Panc1 (cell line): ENCODE measurements at regions of chr1 and their contacts with region 1.

Region 1: GRCh38 chr1:26164036-26164860 is 4.5 kb downstream of the C1orf232 start:
- DNase-seq: no peak
- ATAC-seq: peak; percentile 76
- H3K4me3 ChIP-seq: peak overlapping the region; percentile 43 to 53
- H3K27ac ChIP-seq: peak overlapping the region; percentile 70; the same call in 1 of the 2 replicates
- H3K4me1 ChIP-seq: peaks cover 10% of the 10 kb centered on the region
- H3K27me3 ChIP-seq: no peaks in the 10 kb centered on the region
- CTCF ChIP-seq: peak; percentile 97

Region 2: GRCh38 chr1:25997828-25998761 is 166.2 kb before region 1 on chr1 and contains the start of gene PAFAH2:
- CTCF ChIA-PET with region 1: no interaction called
- POLR2A ChIA-PET with region 1: no interaction called
- in situ Hi-C with region 1: no loop called
- intact Hi-C with region 1: no loop called
- DNase-seq: peak; percentile 99
- ATAC-seq: peak; percentile 99
- H3K4me3 ChIP-seq: peak within 1 kb of the TSS; percentile 78 to 89
- H3K27ac ChIP-seq: peak within 1 kb of the TSS; percentile 99
- H3K4me1 ChIP-seq: peaks cover 12% of the 10 kb centered on the region
- H3K27me3 ChIP-seq: no peaks in the 10 kb centered on the region
- CTCF ChIP-seq: peak; percentile 97
- total RNA-seq, gene PAFAH2: 8.5 TPM

Region 3: DNA sequence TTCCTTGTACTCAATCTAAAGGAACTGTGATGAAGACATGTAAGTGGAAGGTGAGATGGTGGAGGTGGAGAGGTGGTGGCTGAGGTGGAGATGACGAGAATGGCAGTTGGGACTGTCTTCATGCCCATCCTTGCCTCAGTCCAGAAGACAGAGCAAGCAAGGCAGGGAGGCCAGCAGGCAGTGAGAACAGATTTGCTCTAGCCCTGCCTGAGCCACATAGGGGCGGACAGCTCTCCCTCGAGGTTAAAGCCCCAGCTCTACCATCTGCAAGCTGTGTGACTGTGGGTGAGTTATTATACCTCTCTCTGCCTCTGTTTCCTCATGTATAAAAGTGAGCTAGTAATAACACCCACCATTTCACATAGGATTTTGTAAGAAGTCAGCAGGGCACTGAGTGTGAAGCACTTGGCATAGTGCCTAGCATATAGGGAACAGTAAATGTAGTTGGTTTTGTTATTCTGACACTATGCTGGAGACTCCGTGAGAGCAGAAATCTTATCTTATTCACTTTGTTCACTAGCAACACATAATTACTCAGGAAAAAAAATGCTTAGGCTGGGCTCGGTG is 10.2 kb before region 1 on chr1:
- CTCF ChIA-PET with region 1: no interaction called
- POLR2A ChIA-PET with region 1: no interaction called
- in situ Hi-C with region 1: no loop called
- intact Hi-C with region 1: no loop called
- DNase-seq: no peak
- ATAC-seq: 0 out of 2 replicates have a peak, but pooled peaks have one; percentile 22
- H3K4me3 ChIP-seq: no peak overlapping the region
- H3K27ac ChIP-seq: no peak overlapping the region
- H3K4me1 ChIP-seq: no peaks in the 10 kb centered on the region; the same call in 1 of the 2 replicates
- H3K27me3 ChIP-seq: no peaks in the 10 kb centered on the region
- CTCF ChIP-seq: no peak

Region 4: DNA sequence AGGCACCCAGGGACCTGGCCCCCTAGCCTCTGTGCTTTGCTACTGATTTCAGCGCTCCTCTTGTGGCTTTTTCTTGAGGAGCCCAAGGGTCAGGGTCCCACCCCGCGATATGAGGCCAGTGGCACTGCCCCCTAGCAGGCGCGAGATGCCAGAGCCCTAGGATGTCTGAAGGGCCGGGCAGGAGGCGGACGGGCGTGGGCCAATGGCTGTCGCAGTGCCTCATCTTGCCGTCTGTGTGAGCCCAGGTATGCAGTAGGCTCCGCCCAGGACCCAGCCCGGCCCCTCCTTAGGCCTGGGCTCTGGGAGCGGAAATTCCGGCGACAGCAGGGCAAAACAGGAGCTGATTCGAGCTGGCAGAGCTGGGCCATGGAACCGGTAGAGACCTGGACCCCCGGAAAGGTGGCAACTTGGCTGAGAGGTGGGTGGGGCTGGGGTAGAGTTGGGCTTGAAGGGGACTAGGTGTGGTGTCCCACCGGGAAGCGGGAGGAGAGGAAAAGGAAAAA is 13.0 kb after region 1 on chr1 and contains the start of gene CNKSR1:
- CTCF ChIA-PET with region 1: interaction called, 13 read pairs
- POLR2A ChIA-PET with region 1: no interaction called
- in situ Hi-C with region 1: no loop called
- intact Hi-C with region 1: no loop called
- DNase-seq: no peak
- ATAC-seq: peak; percentile 94
- H3K4me3 ChIP-seq: peak within 1 kb of the TSS; percentile 43 to 65
- H3K27ac ChIP-seq: peak within 1 kb of the TSS; percentile 73
- H3K4me1 ChIP-seq: no peaks in the 10 kb centered on the region; the same call in 1 of the 2 replicates
- H3K27me3 ChIP-seq: no peaks in the 10 kb centered on the region
- CTCF ChIP-seq: no peak
- total RNA-seq, gene CNKSR1: 13.7 TPM

Region 5: GRCh38 chr1:26200413-26200812 is 36.2 kb after region 1 on chr1:
- CTCF ChIA-PET with region 1: no interaction called
- POLR2A ChIA-PET with region 1: no interaction called
- in situ Hi-C with region 1: no loop called
- intact Hi-C with region 1: no loop called
- DNase-seq: no peak
- ATAC-seq: no peak
- H3K4me3 ChIP-seq: no peak overlapping the region
- H3K27ac ChIP-seq: no peak overlapping the region
- H3K4me1 ChIP-seq: no peaks in the 10 kb centered on the region
- H3K27me3 ChIP-seq: no peaks in the 10 kb centered on the region
- CTCF ChIP-seq: no peak

Region 6: GRCh38 chr1:26351591-26352337 is 187.5 kb after region 1 on chr1:
- CTCF ChIA-PET with region 1: no interaction called
- POLR2A ChIA-PET with region 1: no interaction called
- in situ Hi-C with region 1: no loop called
- intact Hi-C with region 1: no loop called
- DNase-seq: no peak
- ATAC-seq: peak; percentile 36; the same call in 1 of the 2 replicates
- H3K4me3 ChIP-seq: no peak overlapping the region
- H3K27ac ChIP-seq: no peak overlapping the region
- H3K4me1 ChIP-seq: peaks cover 15% of the 10 kb centered on the region
- H3K27me3 ChIP-seq: no peaks in the 10 kb centered on the region
- CTCF ChIP-seq: no peak